A549 (cell line): ENCODE measurements at regions of chr9 and their contacts with region 1.

Region 1: GRCh38 chr9:94681508-94681907 is 42.2 kb upstream of the FBP1 start:
- DNase-seq: peak; percentile 86
- ATAC-seq: peak; percentile 98 to 99
- H3K4me3 ChIP-seq: no peak overlapping the region
- H3K27ac ChIP-seq: peak overlapping the region; percentile 71 to 82
- H3K4me1 ChIP-seq: peaks cover 16% of the 10 kb centered on the region
- CTCF ChIP-seq: peak; percentile 91
- EP300 ChIP-seq: no peak
- POLR2A ChIP-seq: no peak
- RAD21 ChIP-seq: peak; percentile 94 to 97

Region 2: DNA sequence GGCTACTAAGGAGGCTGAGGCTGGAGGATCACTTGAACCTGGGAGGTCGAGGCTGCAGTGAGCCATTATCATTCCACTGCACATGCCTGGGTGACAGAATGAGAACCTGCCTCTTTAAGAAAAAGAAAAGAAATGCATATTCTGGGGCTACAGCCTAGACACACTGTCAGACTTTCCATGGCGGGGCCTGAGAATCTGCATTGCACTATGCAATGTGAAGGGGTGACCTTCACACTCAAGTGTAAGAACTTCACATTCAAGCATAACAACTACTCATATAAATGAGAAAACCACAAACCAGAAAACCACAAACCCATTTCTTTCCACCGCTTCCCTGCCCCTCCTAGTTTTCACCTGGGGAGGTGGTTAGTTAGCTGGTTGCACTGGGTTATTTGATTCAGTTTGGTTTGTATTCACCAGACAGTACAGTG is 69.9 kb before region 1 on chr9:
- CTCF ChIA-PET with region 1: no interaction called
- POLR2A ChIA-PET with region 1: no interaction called
- DNase-seq: no peak
- ATAC-seq: no peak
- H3K4me3 ChIP-seq: no peak overlapping the region
- H3K27ac ChIP-seq: no peak overlapping the region
- H3K4me1 ChIP-seq: no peaks in the 10 kb centered on the region
- CTCF ChIP-seq: no peak
- EP300 ChIP-seq: no peak
- POLR2A ChIP-seq: no peak
- RAD21 ChIP-seq: no peak

Region 3: GRCh38 chr9:94656200-94656599 is 25.3 kb before region 1 on chr9:
- CTCF ChIA-PET with region 1: interaction called, 13 read pairs
- POLR2A ChIA-PET with region 1: no interaction called
- DNase-seq: no peak
- ATAC-seq: peak in 1 of 2 experiments; percentile 30; a peak in 2 of 6 replicates
- H3K4me3 ChIP-seq: no peak overlapping the region
- H3K27ac ChIP-seq: no peak overlapping the region
- H3K4me1 ChIP-seq: no peaks in the 10 kb centered on the region
- CTCF ChIP-seq: no peak
- EP300 ChIP-seq: no peak
- POLR2A ChIP-seq: no peak
- RAD21 ChIP-seq: no peak

Region 4: DNA sequence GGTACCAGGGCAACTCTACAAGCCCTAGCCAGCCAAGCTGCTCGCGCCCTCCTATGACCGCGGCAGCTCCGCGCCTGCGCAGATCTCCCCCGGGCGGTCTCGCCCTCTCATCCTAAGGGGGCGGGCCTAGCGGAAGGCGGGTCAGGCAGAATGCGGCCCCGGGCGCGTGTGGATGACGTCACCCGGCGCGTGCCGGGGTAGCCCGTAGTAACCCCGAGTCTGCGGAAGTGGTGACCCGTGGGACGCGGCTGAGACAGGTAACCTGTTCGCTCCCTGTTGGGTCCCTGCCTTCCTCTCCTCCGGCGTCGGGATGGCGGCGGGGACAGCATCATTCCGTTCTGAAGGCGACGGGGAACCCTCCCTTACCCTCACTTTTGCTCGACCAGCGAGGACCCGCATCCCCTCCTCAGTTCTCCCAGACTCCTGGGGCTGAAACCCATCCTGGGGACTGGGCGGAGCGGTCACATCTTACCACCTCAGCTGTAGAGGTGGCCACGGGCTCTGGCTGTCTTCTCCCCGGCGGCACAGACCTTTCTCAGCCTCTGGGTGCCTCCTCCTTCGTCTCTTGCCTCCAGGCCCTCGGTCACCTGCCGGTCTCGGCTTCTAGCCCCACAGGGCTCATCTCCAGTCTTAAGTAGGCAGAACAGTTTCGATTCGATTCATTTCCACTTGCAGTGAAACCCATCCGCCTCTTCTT is 45.1 kb after region 1 on chr9 and contains the start of gene AOPEP:
- CTCF ChIA-PET with region 1: interaction called, 14 read pairs
- POLR2A ChIA-PET with region 1: interaction called, 9 read pairs
- DNase-seq: peak; percentile 96 to 97
- ATAC-seq: peak; percentile 95 to 98
- H3K4me3 ChIP-seq: peak within 1 kb of the TSS; percentile 82
- H3K27ac ChIP-seq: peak within 1 kb of the TSS; percentile 84 to 87
- H3K4me1 ChIP-seq: peaks cover 9% of the 10 kb centered on the region
- CTCF ChIP-seq: no peak
- EP300 ChIP-seq: no peak
- POLR2A ChIP-seq: peak; percentile 72
- RAD21 ChIP-seq: no peak
- polyA plus RNA-seq, gene AOPEP: 229 and 266 TPM in 2 replicates

Region 5: GRCh38 chr9:95025213-95026147 is 344.0 kb after region 1 on chr9:
- CTCF ChIA-PET with region 1: interaction called, 21 read pairs
- POLR2A ChIA-PET with region 1: no interaction called
- DNase-seq: peak in 1 of 2 experiments; percentile 93
- ATAC-seq: peak; percentile 71 to 76
- H3K4me3 ChIP-seq: peak overlapping the region; percentile 11; the same call in 1 of the 3 replicates
- H3K27ac ChIP-seq: peak overlapping the region; percentile 86 to 99
- H3K4me1 ChIP-seq: peaks cover 100% of the 10 kb centered on the region
- CTCF ChIP-seq: no peak
- EP300 ChIP-seq: peak in 1 of 2 experiments; percentile 60; a peak in 2 of 5 replicates
- POLR2A ChIP-seq: no peak
- RAD21 ChIP-seq: peak; percentile 41 to 43; a peak in 4 of 5 replicates

Region 6: GRCh38 chr9:95116003-95116807 is 434.7 kb after region 1 on chr9:
- CTCF ChIA-PET with region 1: interaction called, 22 read pairs
- POLR2A ChIA-PET with region 1: no interaction called
- DNase-seq: peak in 1 of 2 experiments; percentile 47
- ATAC-seq: peak; percentile 45 to 63; a peak in 4 of 6 replicates
- H3K4me3 ChIP-seq: no peak overlapping the region
- H3K27ac ChIP-seq: peak overlapping the region in 1 of 2 experiments; percentile 25; a peak in 2 of 6 replicates
- H3K4me1 ChIP-seq: no peaks in the 10 kb centered on the region
- CTCF ChIP-seq: peak; percentile 30; the same call in 2 of the 3 replicates
- EP300 ChIP-seq: no peak
- POLR2A ChIP-seq: no peak
- RAD21 ChIP-seq: peak; percentile 33 to 59; a peak in 3 of 5 replicates

Region 7: GRCh38 chr9:95167998-95168397 is 486.5 kb after region 1 on chr9:
- CTCF ChIA-PET with region 1: interaction called, 14 read pairs
- POLR2A ChIA-PET with region 1: no interaction called
- DNase-seq: peak; percentile 28 to 76
- ATAC-seq: peak; percentile 66 to 78; a peak in 4 of 6 replicates
- H3K4me3 ChIP-seq: no peak overlapping the region
- H3K27ac ChIP-seq: no peak overlapping the region
- H3K4me1 ChIP-seq: peaks cover 14% of the 10 kb centered on the region; the same call in 1 of the 3 replicates
- CTCF ChIP-seq: peak; percentile 59
- EP300 ChIP-seq: no peak
- POLR2A ChIP-seq: no peak
- RAD21 ChIP-seq: peak; percentile 50 to 63; a peak in 3 of 5 replicates